Heart left ventricle (tissue), 16 donors: ENCODE measurements at regions of chr14 and their contacts with region 1.

Region 1: GRCh38 chr14:49461529-49462401 is 124.4 kb downstream of the RPS29 start:
- DNase-seq: peak in 2 of 5 donors; percentile 19 to 27
- ATAC-seq: peak in 3 of 4 donors; percentile 45 to 71 (median 55)
- H3K4me3 ChIP-seq: no peak overlapping the region
- H3K27ac ChIP-seq: no peak overlapping the region
- H3K4me1 ChIP-seq: peaks cover 0 to 4% (median 0%) of the 10 kb centered on the region in 12 donors
- H3K27me3 ChIP-seq: peaks cover 0 to 6% (median 0%) of the 10 kb centered on the region in 9 donors
- CTCF ChIP-seq: peak; percentile 42 to 68 (median 60)
- POLR2A ChIP-seq: no peak

Region 2: DNA sequence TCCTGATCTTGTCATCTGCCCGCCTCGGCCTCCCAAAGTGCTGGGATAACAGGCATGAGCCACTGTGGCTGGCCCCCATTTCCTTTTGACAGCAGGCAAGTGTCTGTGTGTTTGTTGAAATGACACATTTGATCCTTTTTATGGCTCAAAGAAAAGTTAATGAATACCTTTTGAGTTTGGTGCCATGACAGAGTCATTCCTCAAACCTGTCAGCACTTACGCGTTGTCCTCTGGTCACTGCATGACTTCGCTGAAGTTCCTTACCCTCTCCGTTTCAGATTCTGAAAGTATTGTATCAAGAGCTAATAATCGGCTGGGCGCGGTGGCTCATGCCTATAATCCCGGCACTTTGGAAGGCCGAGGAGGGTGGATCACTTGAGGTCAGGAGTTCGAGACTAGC is 358.4 kb after region 1 on chr14:
- intact Hi-C with region 1: loop called in 1 of 10 experiments (anchors 10 kb)
- DNase-seq: no peak
- ATAC-seq: no peak
- H3K4me3 ChIP-seq: no peak overlapping the region
- H3K27ac ChIP-seq: no peak overlapping the region
- H3K4me1 ChIP-seq: no peaks in the 10 kb centered on the region
- H3K27me3 ChIP-seq: no peaks in the 10 kb centered on the region
- CTCF ChIP-seq: no peak
- POLR2A ChIP-seq: no peak